ENCODE measurements at regions of chr15 and their contacts with region 1.

Region 1: DNA sequence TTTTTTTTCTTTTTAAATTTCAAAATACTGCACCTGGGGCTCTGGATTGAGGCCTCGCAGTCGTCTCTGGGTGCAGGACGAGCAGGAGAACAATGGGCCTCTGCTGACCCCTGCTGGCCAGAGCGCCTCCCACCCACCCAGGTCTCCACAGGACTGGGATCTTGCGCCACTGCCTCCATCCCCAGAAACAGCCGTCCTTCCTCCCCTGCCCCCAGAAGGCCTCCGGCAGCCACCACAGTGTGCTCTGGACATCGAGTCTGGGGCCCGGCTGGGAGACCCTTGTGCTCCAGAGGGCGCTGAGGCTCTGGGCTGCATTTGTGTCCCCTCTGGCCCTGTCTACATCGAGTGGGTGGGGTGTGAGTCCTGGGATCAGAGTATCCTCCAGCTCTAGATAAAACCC is 6.6 kb upstream of the ACSBG1 start:
- DNase-seq: peak; percentile 85
- H3K4me3 Mint-ChIP-seq: no peak overlapping the region
- H3K27ac Mint-ChIP-seq: no peak overlapping the region
- H3K4me1 Mint-ChIP-seq: peaks cover 2% of the 10 kb centered on the region
- H3K27me3 Mint-ChIP-seq: peaks cover 14% of the 10 kb centered on the region

Region 2: DNA sequence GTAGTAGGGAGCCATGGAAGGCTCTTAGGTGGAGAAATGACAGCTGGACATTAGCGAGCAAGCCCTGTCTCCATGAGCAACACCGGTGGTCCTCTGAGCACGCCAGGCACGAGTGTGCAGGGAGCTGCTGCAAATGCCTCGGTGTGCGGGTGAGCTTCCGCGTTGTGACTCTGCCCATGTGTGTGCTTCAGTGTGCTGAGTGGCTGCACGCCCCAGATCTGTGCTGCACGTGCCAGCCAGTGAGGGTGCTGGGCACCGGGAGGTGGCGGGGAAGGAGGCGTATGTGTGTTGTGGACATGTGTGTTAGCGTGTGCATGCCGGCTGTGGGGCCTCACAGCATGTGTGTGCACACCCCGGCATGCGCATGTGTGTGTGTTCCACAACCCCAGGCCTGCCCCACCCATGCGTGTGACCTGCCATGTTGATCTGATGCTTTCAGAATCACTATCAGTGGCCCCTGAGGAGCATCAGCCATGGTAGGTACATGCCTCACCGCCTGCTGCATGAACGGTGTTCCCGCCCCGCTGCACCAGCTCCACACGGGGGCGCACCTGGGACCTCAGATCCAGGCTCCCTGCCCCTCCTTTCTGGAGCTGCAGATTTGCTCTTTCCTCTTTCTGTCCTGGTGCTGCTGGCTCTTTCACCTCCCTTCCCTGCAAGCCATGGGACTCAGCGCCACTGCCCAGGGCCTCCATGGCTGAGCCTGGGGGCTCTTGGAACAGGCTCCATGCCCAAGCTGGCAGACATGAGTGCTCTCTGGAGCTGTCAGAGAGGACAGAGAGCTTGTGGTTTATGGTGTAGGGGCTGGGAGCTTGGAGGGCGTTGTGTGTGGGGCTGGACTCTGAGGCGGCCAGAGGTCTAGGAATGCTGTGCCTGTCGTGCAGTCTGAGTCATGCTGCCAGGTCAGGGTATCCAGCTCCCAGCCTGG is 332.9 kb before region 1 on chr15:
- CTCF ChIA-PET with region 1: interaction called, 20 read pairs
- POLR2A ChIA-PET with region 1: no interaction called
- DNase-seq: peak; percentile 75
- H3K4me3 Mint-ChIP-seq: no peak overlapping the region
- H3K27ac Mint-ChIP-seq: no peak overlapping the region
- H3K4me1 Mint-ChIP-seq: peaks cover 7% of the 10 kb centered on the region
- H3K27me3 Mint-ChIP-seq: peaks cover 12% of the 10 kb centered on the region

Region 3: DNA sequence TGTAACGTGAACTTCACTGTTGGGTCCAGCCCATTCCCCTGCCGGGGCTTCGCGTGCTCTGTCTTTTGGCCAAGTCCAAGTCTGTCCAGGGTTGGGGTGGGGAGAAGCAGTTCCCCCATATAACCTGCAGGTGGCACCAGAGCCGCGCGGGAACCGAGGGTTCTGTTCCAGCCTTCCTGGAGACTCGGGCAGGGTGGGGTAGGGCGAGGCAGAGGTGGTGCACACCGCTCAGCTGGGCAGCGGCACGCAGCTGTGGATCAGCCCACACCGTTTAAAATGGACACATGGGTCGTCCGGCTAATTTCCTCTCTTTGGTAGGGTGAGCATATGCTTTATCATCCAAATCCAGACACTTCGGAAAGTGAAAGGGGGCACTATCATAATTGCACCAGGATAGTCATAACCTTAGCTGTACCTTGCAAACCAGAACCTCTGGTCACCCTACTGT is 281.6 kb before region 1 on chr15:
- CTCF ChIA-PET with region 1: interaction called, 26 read pairs
- POLR2A ChIA-PET with region 1: no interaction called
- DNase-seq: peak; percentile 82
- H3K4me3 Mint-ChIP-seq: peak overlapping the region; percentile 60
- H3K27ac Mint-ChIP-seq: no peak overlapping the region
- H3K4me1 Mint-ChIP-seq: peaks cover 32% of the 10 kb centered on the region
- H3K27me3 Mint-ChIP-seq: peaks cover 34% of the 10 kb centered on the region

Region 4: DNA sequence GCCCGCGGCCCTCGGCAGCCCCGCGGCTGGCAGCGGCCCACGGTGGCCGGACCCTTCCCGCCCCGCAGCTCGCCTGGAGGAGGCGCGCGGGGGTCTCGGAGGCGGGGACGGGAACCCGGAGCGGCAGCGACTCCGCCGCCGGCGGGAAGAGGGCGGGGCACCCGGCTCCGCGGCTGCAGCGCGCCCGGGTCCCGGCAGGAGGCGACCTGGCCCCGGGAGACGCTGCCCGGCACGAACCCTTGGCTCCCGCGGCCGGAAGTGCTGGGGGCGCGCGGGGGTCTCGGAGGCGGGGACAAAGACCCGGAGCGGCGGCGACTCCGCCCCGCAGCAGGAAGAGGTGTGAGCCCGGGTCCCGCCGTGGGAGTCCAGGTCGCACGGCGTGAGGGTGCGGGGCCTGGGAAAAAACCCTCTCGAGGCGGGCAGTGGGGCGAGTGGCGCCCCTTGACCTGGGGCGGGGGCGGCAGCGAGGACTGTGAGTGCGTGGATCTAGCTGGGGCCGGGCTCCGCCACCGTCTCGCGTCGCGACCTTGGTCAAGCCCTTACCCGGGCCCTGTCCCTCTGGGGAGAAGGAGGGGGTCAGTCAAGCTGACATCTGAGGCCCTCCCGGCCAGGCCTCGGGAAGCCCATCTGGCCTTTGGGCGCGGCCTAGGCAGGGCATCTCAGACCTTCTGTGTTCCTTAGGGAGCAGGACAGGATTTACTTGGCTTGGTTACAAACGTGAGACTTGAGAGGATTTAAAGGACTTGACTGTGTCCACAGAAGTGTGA is 109.5 kb before region 1 on chr15 and contains the start of gene CIB2:
- CTCF ChIA-PET with region 1: interaction called, 34 read pairs
- POLR2A ChIA-PET with region 1: no interaction called
- DNase-seq: peak; percentile 81
- H3K4me3 Mint-ChIP-seq: peak within 1 kb of the TSS; percentile 79
- H3K27ac Mint-ChIP-seq: no peak within 1 kb of the TSS
- H3K4me1 Mint-ChIP-seq: peaks cover 23% of the 10 kb centered on the region
- H3K27me3 Mint-ChIP-seq: peaks cover 2% of the 10 kb centered on the region
- total RNA-seq, gene CIB2: 0.91 to 1.1 TPM

Region 5: GRCh38 chr15:78155355-78155939 is 85.6 kb before region 1 on chr15:
- CTCF ChIA-PET with region 1: no interaction called
- POLR2A ChIA-PET with region 1: no interaction called
- DNase-seq: no peak
- H3K4me3 Mint-ChIP-seq: no peak overlapping the region
- H3K27ac Mint-ChIP-seq: no peak overlapping the region
- H3K4me1 Mint-ChIP-seq: peaks cover 26% of the 10 kb centered on the region
- H3K27me3 Mint-ChIP-seq: no peaks in the 10 kb centered on the region

Region 6: DNA sequence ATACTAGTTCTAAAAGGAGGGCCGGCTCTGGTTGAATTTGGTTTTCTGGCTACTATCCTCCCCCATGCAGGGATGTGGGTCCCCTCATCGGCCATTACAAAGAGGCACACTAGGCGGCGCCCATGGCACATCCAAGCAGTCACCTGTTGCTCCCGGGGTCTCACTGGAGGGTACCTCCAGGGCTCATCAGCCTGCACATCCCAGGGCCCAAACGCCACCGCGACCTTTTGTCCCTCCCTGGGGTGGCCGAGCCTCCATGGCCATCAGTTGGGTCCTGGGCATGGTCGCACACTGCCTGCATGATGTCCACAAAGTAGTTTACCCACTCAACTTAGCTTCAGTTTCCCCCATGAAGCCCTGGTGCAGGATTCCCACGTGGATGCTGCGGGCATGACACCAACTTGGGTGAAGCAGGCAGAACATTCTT is 63.5 kb before region 1 on chr15:
- CTCF ChIA-PET with region 1: interaction called, 10 read pairs
- POLR2A ChIA-PET with region 1: no interaction called
- DNase-seq: peak; percentile 49
- H3K4me3 Mint-ChIP-seq: no peak overlapping the region
- H3K27ac Mint-ChIP-seq: no peak overlapping the region
- H3K4me1 Mint-ChIP-seq: peaks cover 23% of the 10 kb centered on the region
- H3K27me3 Mint-ChIP-seq: no peaks in the 10 kb centered on the region

Region 7: GRCh38 chr15:78204351-78205309 is 36.4 kb before region 1 on chr15:
- CTCF ChIA-PET with region 1: interaction called, 12 read pairs
- POLR2A ChIA-PET with region 1: no interaction called
- DNase-seq: peak; percentile 10
- H3K4me3 Mint-ChIP-seq: no peak overlapping the region
- H3K27ac Mint-ChIP-seq: no peak overlapping the region
- H3K4me1 Mint-ChIP-seq: no peaks in the 10 kb centered on the region
- H3K27me3 Mint-ChIP-seq: peaks cover 10% of the 10 kb centered on the region

Region 8: GRCh38 chr15:78360426-78360825 is 119.4 kb after region 1 on chr15:
- CTCF ChIA-PET with region 1: no interaction called
- POLR2A ChIA-PET with region 1: no interaction called
- DNase-seq: no peak
- H3K4me3 Mint-ChIP-seq: no peak overlapping the region
- H3K27ac Mint-ChIP-seq: no peak overlapping the region
- H3K4me1 Mint-ChIP-seq: no peaks in the 10 kb centered on the region
- H3K27me3 Mint-ChIP-seq: peaks cover 20% of the 10 kb centered on the region

Measured in activated CD4-positive, alpha-beta memory T cell treated with anti-CD3 and anti-CD28 coated beads, Interleukin-2, amount 10 ng/mL, durations not matched to agents 7 days and 5 days (primary cell).